ENCODE measurements at regions of chr1 and their contacts with region 1.

Region 1: GRCh38 chr1:19203440-19203839 is 6.6 kb downstream of the UBR4 start:
- DNase-seq: peak; percentile 90
- ATAC-seq: peak; percentile 97
- H3K4me3 ChIP-seq: peak overlapping the region; percentile 17; the same call in 1 of the 2 replicates
- H3K27ac ChIP-seq: peak overlapping the region; percentile 80
- H3K4me1 ChIP-seq: peaks cover 33% of the 10 kb centered on the region
- H3K27me3 ChIP-seq: no peaks in the 10 kb centered on the region
- CTCF ChIP-seq: no peak

Region 2: GRCh38 chr1:19044975-19045831 is 158.2 kb before region 1 on chr1:
- CTCF ChIA-PET with region 1: no interaction called
- POLR2A ChIA-PET with region 1: no interaction called
- intact Hi-C with region 1: no loop called
- DNase-seq: no peak
- ATAC-seq: no peak
- H3K4me3 ChIP-seq: no peak overlapping the region
- H3K27ac ChIP-seq: no peak overlapping the region
- H3K4me1 ChIP-seq: no peaks in the 10 kb centered on the region
- H3K27me3 ChIP-seq: no peaks in the 10 kb centered on the region
- CTCF ChIP-seq: no peak

Region 3: DNA sequence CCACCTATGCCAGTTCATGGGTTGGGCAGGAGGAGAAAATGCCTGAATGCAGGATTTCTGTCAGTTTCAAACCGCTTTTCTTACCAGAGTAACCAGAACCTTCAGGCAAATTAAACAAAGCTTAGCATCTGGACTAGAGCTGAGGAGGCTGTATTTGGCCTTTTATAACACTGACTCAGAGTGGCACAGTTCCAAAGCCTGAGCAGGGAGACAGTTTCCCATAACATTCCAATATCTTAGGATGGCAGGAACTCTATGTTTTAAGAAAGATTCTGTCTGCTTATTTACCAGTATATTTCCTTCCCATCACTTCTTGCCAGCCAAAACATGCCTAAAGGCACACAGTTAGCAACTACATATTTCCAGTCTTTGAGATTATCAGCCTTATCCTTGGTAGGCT is 40.2 kb before region 1 on chr1:
- CTCF ChIA-PET with region 1: no interaction called
- POLR2A ChIA-PET with region 1: no interaction called
- intact Hi-C with region 1: loop called (anchors 2 kb)
- DNase-seq: peak; percentile 73
- ATAC-seq: peak; percentile 91
- H3K4me3 ChIP-seq: no peak overlapping the region
- H3K27ac ChIP-seq: peak overlapping the region; percentile 45
- H3K4me1 ChIP-seq: peaks cover 44% of the 10 kb centered on the region
- H3K27me3 ChIP-seq: no peaks in the 10 kb centered on the region
- CTCF ChIP-seq: no peak

Measured in PC-3 (cell line).